ENCODE measurements at regions of chr13 and their contacts with region 1.

Region 1: DNA sequence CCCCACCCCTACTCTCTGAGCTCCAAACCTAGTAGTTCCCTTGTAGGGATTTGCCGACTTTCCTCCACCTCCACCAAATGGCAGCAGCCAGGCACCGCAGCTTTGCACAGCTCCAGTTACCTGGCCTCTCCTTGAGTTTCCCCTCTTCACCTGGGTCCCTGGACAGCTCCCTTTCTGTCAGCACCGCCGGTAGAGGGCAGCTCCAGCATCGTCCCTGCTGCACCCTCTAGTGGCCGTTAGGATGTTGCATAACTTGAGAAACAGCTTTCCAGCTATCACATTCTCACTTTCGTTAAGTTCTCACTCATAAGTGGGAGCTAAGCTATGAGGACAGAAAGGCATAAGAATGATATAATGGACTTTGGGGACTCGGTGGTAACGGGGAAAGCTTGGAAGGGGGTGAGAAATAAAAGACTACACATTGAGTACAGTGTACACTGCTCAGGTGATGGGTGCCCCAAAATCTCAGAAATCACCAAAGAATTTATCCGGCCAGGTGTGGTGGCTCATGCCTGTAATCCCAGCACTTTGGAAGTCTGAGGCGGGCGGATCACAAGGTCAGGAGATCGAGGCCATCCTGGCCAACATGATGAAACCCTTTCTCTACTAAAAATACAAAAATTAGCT is 60.4 kb upstream of the OLFM4 start:
- DNase-seq: peak; percentile 65
- H3K4me3 Mint-ChIP-seq: no peak overlapping the region
- H3K27ac Mint-ChIP-seq: no peak overlapping the region
- H3K4me1 Mint-ChIP-seq: no peaks in the 10 kb centered on the region
- H3K27me3 Mint-ChIP-seq: peaks cover 6% of the 10 kb centered on the region

Region 2: DNA sequence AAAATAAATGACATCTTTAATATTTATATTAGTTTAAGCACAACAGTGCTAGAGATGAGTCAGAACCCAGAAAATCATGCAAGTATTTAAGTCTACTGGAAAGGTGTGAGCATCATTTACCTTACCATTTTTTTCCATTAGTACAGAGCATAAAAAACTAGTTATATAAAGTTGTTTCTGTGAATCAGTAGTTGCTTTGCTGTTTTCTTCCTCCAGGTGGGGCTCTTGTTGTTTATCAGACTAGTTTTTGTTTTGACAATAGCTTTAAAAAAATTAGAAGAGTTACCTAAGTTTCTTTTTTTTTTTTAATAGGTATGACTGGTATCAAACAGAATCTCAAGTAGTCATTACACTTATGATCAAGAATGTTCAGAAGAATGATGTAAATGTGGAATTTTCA is 302.9 kb before region 1 on chr13:
- CTCF ChIA-PET with region 1: interaction called, 27 read pairs
- POLR2A ChIA-PET with region 1: no interaction called
- intact Hi-C with region 1: loop called (anchors 10 kb)
- DNase-seq: no peak
- H3K4me3 Mint-ChIP-seq: no peak overlapping the region
- H3K27ac Mint-ChIP-seq: no peak overlapping the region
- H3K4me1 Mint-ChIP-seq: peaks cover 2% of the 10 kb centered on the region
- H3K27me3 Mint-ChIP-seq: no peaks in the 10 kb centered on the region

Region 3: DNA sequence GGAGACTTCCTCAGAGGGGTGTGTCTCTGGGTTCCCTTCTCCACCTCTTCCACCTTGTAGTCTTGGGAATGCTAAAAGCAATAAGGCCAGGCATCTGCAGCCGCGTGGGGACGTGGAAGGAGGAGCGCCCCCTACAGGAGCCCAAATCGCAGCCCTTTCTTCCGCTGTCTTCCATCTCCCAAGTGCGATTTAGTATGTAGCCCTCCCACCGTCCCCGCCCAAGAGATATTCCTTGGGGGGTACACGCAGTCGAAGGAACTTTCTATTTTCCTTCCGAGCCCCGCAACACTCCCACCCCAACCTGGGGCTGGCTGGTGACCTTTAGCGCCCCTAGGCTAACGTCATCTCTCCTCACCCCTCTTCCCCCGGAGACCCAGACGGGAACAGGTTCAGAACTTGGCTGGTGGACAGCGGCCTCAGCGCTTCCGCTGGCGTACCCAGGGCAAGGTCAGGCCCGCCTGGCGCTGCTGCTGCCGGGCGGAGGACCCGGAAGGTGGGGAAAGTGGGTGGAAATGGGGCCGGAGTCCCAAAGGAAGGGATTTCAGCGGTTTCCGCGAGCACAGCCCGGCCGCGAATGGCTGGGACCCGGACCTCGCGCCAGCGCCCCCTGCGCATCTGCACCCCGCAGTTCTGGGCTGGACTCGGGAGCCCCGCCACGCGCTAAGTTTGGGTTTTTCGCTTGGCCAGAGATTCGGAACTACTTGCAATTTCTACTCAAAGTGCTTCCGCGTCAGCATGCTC is 117.6 kb before region 1 on chr13:
- CTCF ChIA-PET with region 1: interaction called, 3 read pairs
- POLR2A ChIA-PET with region 1: no interaction called
- intact Hi-C with region 1: loop called (anchors 5 kb)
- DNase-seq: peak; percentile 65
- H3K4me3 Mint-ChIP-seq: peak overlapping the region; percentile 58
- H3K27ac Mint-ChIP-seq: no peak overlapping the region
- H3K4me1 Mint-ChIP-seq: peaks cover 24% of the 10 kb centered on the region
- H3K27me3 Mint-ChIP-seq: peaks cover 63% of the 10 kb centered on the region

Region 4: GRCh38 chr13:52911340-52911739 is 56.8 kb before region 1 on chr13:
- CTCF ChIA-PET with region 1: no interaction called
- POLR2A ChIA-PET with region 1: no interaction called
- intact Hi-C with region 1: no loop called
- DNase-seq: no peak
- H3K4me3 Mint-ChIP-seq: no peak overlapping the region
- H3K27ac Mint-ChIP-seq: no peak overlapping the region
- H3K4me1 Mint-ChIP-seq: no peaks in the 10 kb centered on the region
- H3K27me3 Mint-ChIP-seq: peaks cover 13% of the 10 kb centered on the region

Region 5: DNA sequence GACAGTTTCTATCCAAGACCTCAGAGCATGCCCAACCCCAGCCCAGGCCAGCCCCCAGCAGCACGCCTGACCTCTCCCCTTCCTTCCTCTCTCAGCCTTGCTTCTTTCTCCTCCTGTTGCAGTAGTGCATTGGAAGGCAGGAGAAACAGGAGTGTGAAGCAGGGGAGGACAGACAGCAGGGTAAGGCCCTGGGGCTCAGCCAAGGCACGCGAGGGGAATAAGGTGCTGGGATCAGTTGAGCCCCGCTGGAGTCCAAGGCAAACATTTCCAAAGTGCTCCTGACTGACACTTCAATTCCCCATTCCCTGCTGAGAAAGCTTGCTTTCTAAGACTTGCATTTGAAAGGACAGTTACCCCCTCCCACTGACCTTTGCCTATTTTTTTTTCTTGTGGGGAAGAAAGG is 12.7 kb before region 1 on chr13:
- CTCF ChIA-PET with region 1: interaction called, 23 read pairs
- POLR2A ChIA-PET with region 1: no interaction called
- intact Hi-C with region 1: no loop called
- DNase-seq: no peak
- H3K4me3 Mint-ChIP-seq: no peak overlapping the region
- H3K27ac Mint-ChIP-seq: no peak overlapping the region
- H3K4me1 Mint-ChIP-seq: no peaks in the 10 kb centered on the region
- H3K27me3 Mint-ChIP-seq: no peaks in the 10 kb centered on the region

Region 6: GRCh38 chr13:52980695-52981094 is 12.5 kb after region 1 on chr13:
- CTCF ChIA-PET with region 1: interaction called, 10 read pairs
- POLR2A ChIA-PET with region 1: no interaction called
- intact Hi-C with region 1: no loop called
- DNase-seq: no peak
- H3K4me3 Mint-ChIP-seq: no peak overlapping the region
- H3K27ac Mint-ChIP-seq: no peak overlapping the region
- H3K4me1 Mint-ChIP-seq: no peaks in the 10 kb centered on the region
- H3K27me3 Mint-ChIP-seq: peaks cover 2% of the 10 kb centered on the region

Measured in activated CD4-positive, alpha-beta memory T cell treated with anti-CD3 and anti-CD28 coated beads for 36 hours (primary cell).